MCF 10A (cell line): ENCODE measurements at regions of chr1 and their contacts with region 1.

Region 1: GRCh38 chr1:203625628-203626019 is 1.0 kb upstream of the ATP2B4 start:
- DNase-seq: peak; percentile 96
- H3K4me3 Mint-ChIP-seq: peak overlapping the region; percentile 75
- H3K27ac Mint-ChIP-seq: peak overlapping the region; percentile 91
- H3K4me1 Mint-ChIP-seq: peaks cover 53% of the 10 kb centered on the region
- H3K27me3 Mint-ChIP-seq: no peaks in the 10 kb centered on the region
- CTCF ChIP-seq: peak; percentile 28

Region 2: GRCh38 chr1:203504397-203505250 is 121.0 kb before region 1 on chr1:
- CTCF ChIA-PET with region 1: interaction called, 55 read pairs
- POLR2A ChIA-PET with region 1: interaction called, 18 read pairs
- intact Hi-C with region 1: loop called (anchors 1 kb)
- DNase-seq: peak; percentile 96
- H3K4me3 Mint-ChIP-seq: no peak overlapping the region
- H3K27ac Mint-ChIP-seq: no peak overlapping the region
- H3K4me1 Mint-ChIP-seq: peaks cover 22% of the 10 kb centered on the region
- H3K27me3 Mint-ChIP-seq: peaks cover 22% of the 10 kb centered on the region
- CTCF ChIP-seq: peak; percentile 94

Region 3: DNA sequence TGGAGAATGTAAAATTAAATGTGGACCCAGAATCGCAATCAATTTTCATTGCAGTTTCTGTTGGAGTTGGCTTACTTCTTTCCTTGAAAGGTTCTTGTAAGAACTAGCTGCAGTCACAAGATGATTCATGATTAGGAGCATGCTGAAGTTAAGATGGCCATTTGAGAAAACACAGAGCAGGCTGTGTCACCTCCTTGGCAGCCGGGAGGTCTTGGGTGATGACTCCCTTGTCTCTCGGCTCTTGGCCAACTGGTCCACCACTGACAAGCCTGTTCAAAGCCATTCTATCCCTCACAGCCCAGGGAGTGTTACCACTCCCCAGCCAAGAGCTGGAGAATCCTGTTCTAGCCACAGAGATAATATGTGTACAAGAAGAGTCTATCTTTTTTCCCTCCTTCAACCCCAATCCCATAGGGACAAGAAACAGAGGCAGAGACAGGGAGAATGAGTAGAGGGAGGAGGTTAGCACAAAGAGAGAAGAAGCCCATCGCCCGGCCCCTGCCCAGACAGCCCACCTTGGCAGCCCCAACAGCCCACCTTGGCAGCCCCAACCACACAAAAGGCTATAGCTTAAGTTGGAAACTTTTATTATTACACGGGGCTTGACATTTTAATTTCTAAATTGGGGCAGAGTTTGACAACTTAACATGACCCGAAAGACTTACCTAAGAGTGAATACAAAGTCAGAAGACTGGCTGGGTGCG is 90.9 kb before region 1 on chr1:
- CTCF ChIA-PET with region 1: interaction called, 3 read pairs
- POLR2A ChIA-PET with region 1: interaction called, 34 read pairs
- intact Hi-C with region 1: no loop called
- DNase-seq: peak; percentile 95
- H3K4me3 Mint-ChIP-seq: peak overlapping the region; percentile 35
- H3K27ac Mint-ChIP-seq: peak overlapping the region; percentile 58
- H3K4me1 Mint-ChIP-seq: peaks cover 36% of the 10 kb centered on the region
- H3K27me3 Mint-ChIP-seq: no peaks in the 10 kb centered on the region
- CTCF ChIP-seq: no peak

Region 4: GRCh38 chr1:203612932-203613682 is 12.5 kb before region 1 on chr1:
- CTCF ChIA-PET with region 1: interaction called, 13 read pairs
- POLR2A ChIA-PET with region 1: interaction called, 23 read pairs
- intact Hi-C with region 1: no loop called
- DNase-seq: no peak
- H3K4me3 Mint-ChIP-seq: no peak overlapping the region
- H3K27ac Mint-ChIP-seq: no peak overlapping the region
- H3K4me1 Mint-ChIP-seq: no peaks in the 10 kb centered on the region
- H3K27me3 Mint-ChIP-seq: no peaks in the 10 kb centered on the region
- CTCF ChIP-seq: no peak

Region 5: GRCh38 chr1:203673550-203674427 is 48.2 kb after region 1 on chr1:
- CTCF ChIA-PET with region 1: interaction called, 8 read pairs
- POLR2A ChIA-PET with region 1: interaction called, 17 read pairs
- intact Hi-C with region 1: no loop called
- DNase-seq: peak; percentile 99
- H3K4me3 Mint-ChIP-seq: peak overlapping the region; percentile 1
- H3K27ac Mint-ChIP-seq: peak overlapping the region; percentile 6
- H3K4me1 Mint-ChIP-seq: peaks cover 36% of the 10 kb centered on the region
- H3K27me3 Mint-ChIP-seq: no peaks in the 10 kb centered on the region
- CTCF ChIP-seq: peak; percentile 39

Region 6: DNA sequence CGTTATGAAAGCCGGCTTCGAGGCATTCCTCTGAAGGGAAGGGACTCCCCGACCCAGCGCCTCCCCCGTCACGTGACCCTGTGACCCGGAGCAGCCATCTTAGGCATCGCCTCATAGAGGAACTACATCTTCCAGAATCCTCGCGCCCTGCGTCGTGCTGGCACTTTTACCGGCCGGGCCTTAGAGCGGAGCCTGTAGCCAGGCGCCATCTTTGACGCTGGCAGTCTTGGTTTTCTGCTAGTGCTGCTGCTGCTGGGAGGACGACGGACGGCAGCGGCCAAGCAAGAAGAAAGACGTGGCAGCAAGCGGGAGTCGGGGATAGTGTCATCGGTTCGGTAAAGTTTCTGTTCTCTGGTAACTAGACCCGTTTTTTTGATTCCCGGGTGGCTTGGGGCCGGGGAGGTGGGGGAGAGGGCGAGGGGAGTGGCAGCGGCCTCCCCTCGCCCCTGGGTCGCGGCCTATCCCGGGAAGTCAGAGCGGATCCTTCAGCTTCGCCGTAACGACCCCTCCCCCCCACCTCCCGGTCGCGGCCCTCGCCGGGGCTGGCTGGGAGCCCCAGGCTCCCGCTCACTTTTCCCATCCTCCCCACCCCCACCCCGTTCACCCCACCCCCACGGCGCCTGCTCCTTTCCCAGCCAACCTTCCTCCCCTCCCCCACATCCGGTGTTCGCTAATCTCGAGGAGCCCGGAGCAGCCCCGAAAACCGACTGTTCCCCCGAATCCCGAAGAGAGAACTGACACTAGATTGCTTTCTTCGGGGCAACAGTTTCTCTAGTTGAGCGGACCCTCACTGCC is 170.0 kb after region 1 on chr1 and contains the starts of genes ZBED6 and ZC3H11A:
- CTCF ChIA-PET with region 1: interaction called, 7 read pairs
- POLR2A ChIA-PET with region 1: interaction called, 5 read pairs
- intact Hi-C with region 1: loop called (anchors 10 kb)
- DNase-seq: peak; percentile 100
- H3K4me3 Mint-ChIP-seq: peak within 1 kb of the TSS; percentile 86
- H3K27ac Mint-ChIP-seq: peak within 1 kb of the TSS; percentile 98
- H3K4me1 Mint-ChIP-seq: peaks cover 44% of the 10 kb centered on the region
- H3K27me3 Mint-ChIP-seq: no peaks in the 10 kb centered on the region
- CTCF ChIP-seq: no peak
- total RNA-seq, gene ZBED6: 68.2 and 69.8 TPM in 2 replicates
- total RNA-seq, gene ZC3H11A: 148 and 156 TPM in 2 replicates